Posterior cingulate gyrus (tissue), 11 donors: ENCODE measurements at regions of chr6 and their contacts with region 1.

Region 1: DNA sequence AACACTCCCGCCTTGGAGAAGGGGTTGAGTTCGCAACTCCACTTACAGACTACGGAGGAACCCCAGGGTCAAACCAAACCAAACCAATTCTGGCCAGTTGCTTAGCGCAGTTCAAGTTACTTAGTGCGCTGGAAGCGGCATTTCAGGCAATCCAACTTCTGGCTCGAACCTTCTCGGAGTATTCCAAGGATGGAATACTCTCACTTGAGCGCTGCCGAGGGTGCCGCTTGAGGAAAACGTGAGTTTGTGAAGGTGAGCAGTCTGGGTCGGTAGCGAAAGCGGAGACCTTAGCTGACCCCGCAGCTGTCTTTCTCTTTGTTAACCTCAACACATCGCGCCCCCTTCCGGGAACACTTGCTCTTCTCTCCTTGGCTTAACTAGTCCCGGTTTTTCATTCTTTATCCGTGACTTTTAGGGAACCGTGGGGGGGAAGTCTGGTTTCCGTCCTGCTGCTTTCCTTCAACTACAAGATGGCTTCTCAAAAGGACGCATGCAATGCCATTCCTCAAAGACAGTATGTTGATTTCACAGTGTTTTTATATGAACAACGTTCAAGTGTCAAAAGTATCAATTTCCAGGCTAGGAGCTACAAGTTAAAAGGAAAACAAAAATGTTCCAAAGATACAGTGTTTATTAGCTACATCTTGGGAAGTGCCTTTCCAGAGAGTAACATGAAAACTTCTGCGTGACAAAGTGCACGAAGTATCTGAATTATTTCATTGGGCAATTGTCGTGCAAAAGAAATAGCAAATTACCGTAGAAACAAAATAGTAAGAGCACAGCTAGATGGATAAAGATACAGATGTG is 742 bp upstream of the PNISR start:
- DNase-seq: peak; percentile 61 to 94 (median 81)

Region 2: GRCh38 chr6:99016355-99016754 is 409.5 kb before region 1 on chr6:
- intact Hi-C with region 1: no loop called
- DNase-seq: no peak

Region 3: DNA sequence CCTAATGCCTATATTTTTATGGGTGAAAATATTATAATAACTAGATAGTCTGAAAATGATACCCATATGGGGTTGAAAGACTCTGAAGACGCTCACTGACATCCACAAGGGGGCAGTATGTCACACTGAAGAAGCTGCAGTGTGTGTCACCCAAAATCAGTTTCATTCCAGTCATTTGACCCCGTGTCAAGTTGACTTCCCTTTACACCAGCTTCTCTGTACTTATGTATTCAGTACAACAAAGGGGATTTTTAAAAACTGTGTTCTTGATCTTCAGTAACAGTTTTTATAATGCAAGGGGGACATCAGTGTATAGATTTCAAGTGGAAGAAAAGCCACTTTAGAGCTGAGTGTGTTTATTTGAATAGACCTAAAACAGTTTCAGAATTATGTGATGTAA is 95.7 kb before region 1 on chr6:
- intact Hi-C with region 1: loop called (anchors 5 kb)
- DNase-seq: peak in 4 of 10 donors; percentile 22 to 54 (median 26)

Region 4: GRCh38 chr6:99393698-99394531 is 31.9 kb before region 1 on chr6 and contains the start of gene COQ3:
- intact Hi-C with region 1: loop called (anchors 2 kb)
- DNase-seq: peak; percentile 64 to 94 (median 72)

Region 5: GRCh38 chr6:99514089-99514488 is 88.2 kb after region 1 on chr6:
- intact Hi-C with region 1: loop called (anchors 10 kb)
- DNase-seq: no peak

Region 6: DNA sequence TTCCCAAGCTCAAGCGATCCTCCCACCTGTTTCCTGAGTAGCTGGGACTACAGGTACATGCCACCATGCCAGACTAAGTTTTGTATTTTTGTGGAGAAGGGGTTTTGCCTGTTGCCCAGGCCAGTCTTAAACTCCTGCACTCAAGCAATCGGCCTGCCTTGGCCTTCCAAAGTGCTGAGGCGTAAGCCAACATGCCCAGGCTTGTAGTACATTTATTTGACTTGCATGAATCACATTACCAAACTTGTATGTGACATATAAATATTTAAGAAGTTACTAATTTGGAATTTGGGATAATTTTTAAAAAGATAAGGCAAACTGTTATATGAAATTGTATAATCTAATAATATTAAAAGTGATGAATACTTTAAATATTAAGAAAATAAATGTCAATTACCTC is 410.6 kb after region 1 on chr6:
- intact Hi-C with region 1: no loop called
- DNase-seq: peak in 1 of 10 donors; percentile 27